AG04449 (cell line): ENCODE measurements at regions of chr3 and their contacts with region 1.

Region 1: DNA sequence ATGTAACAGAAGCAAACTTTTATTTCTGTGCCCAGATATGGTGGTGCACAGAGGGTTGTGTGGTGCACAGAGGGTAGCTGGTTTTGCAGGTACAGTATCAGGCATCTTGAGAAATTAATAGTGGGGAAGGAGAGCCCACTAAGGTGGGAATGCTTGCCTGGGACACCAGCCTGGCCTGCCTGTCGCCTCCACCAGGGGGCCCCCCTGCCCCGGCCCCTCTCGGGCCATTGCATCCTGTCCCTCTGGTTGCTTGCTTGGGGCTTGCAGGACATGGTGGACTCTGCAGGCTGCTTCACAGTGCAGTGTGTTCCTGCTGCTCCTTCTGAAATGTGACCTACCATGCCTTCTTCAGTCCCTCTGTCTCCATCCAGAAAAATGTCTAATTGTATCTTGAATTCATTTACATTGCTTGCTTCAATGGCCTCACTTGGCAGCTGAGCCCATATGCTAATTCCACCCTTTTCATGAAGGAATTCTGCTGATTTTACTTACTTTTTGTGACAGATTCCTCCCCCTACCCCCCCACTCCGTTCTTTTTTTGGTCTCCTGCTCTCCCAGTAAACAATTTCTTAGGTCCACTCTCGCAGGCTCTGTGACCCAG is 73.6 kb downstream of the EEFSEC start:
- DNase-seq: no peak
- H3K4me3 ChIP-seq: no peak overlapping the region
- CTCF ChIP-seq: peak; percentile 90

Region 2: DNA sequence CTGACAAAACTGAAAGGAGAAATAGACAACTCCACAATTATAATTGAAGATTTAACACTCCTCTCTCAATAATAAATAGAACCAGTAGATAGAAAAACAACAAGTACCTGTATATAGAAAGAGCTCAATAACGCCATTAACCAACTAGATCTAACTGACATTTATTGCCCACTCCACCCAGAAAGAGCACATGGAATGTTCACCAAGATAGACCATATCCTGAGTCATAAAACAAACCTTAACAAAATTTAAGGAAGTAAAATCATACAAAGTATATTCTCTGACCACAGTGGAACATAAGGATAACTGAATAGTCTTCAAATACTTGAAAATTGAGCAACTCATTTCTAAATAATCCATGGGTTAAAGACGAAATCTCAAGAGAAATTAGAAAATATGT is 286.8 kb before region 1 on chr3:
- CTCF ChIA-PET with region 1: no interaction called
- POLR2A ChIA-PET with region 1: no interaction called
- DNase-seq: no peak
- H3K4me3 ChIP-seq: no peak overlapping the region
- CTCF ChIP-seq: no peak

Region 3: GRCh38 chr3:127988770-127989557 is 237.9 kb before region 1 on chr3:
- CTCF ChIA-PET with region 1: no interaction called
- POLR2A ChIA-PET with region 1: no interaction called
- DNase-seq: no peak
- H3K4me3 ChIP-seq: no peak overlapping the region
- CTCF ChIP-seq: no peak

Region 4: DNA sequence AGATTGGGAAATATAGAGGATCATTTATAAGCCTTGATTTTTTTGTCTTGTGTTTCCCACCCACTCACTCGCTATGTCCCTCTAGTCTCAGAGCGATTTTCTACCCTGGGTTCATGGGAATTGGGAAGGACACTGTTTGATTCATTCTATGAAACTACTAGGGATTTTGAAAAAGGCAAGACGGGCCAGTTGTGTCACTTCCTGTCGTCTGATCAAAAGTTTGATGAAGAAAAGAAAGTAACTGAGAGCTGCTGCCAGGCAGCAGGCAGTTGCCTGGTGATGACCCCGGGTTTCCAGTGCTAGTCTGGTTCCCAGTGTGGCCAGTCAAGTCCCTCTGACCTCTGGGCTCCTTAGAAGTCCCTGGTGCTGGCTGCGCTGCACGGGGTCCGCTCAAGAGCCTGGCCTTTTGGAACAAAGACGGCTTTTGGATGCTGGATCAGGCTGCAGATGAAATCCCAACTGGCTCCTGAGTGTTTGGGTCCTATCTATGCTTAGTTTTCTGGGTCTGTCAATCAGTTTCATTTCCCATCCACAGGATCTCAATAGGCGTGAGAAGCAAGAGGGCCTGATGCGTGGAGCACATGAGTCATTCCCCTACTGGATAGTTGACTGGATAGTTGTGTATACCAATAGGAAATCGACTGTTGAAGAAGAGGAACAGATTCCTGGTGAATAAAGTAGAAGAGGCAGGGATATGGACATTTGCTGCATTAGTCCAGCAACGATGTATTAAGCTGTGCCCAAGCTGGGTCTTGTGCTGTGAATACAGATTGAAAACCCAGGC is 16.1 kb after region 1 on chr3:
- CTCF ChIA-PET with region 1: interaction called, 68 read pairs
- POLR2A ChIA-PET with region 1: no interaction called
- DNase-seq: no peak
- H3K4me3 ChIP-seq: no peak overlapping the region
- CTCF ChIP-seq: no peak

Region 5: GRCh38 chr3:128584412-128585020 is 357.6 kb after region 1 on chr3:
- CTCF ChIA-PET with region 1: interaction called, 11 read pairs
- POLR2A ChIA-PET with region 1: no interaction called
- DNase-seq: peak; percentile 23
- H3K4me3 ChIP-seq: no peak overlapping the region
- CTCF ChIP-seq: peak; percentile 98